ENCODE measurements at regions of chr2 and their contacts with region 1.

Region 1: DNA sequence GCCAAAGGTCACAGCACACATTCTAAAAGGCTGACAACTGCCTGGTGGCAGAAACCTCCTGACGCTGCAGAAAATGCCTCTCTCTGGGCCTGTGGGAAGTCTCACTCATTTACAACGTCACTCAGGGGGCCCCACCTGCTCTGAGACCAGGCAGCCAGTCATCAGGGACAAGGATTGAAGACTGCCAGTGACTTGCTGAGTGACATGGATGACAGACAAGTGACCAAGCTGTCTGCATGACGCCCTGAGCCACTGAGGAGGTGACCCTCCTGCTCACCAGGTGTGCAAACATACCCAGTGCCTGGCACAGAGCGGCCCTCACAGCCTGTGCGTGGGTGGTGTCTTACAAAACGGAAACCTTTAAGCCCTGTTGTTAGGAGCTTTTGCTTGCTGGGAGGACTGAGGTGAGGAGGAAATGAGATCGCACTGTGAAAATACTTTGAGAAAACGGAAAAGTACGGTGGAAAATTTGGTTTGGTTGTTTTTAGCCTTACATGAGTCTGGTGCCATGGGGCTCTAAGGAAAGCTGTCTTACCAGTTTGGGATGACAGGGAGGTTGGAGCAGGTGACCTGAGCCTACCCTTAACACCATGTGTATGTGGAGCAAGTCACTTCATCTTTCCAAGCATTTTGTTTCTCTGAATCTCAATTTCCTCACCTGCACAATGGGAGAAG is 392.3 kb downstream of the TNS1 start:
- DNase-seq: peak; percentile 89
- H3K4me3 Mint-ChIP-seq: peak overlapping the region; percentile 25
- H3K27ac Mint-ChIP-seq: peak overlapping the region; percentile 84
- H3K4me1 Mint-ChIP-seq: peaks cover 54% of the 10 kb centered on the region
- H3K27me3 Mint-ChIP-seq: no peaks in the 10 kb centered on the region

Region 2: DNA sequence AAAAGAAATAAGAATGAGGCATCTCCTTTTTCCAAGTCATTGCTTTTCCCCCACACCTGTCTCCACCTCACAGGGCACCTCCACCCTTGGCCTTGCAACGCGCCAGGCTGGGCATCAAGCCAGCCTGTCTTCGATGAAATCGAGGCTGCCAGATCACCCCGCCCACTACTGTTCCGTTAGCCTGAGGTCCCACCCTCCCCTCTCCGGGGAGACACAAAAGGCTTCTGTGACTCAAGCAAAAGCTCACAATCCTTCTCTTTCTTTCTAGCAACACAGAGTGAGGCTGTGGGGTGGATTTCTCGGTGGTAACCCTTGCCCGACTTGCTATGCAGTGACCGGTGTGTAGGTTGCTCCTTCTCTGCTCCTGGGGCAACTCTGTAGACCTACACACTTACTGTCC is 760.6 kb before region 1 on chr2:
- CTCF ChIA-PET with region 1: no interaction called
- intact Hi-C with region 1: loop called (anchors 10 kb)
- DNase-seq: peak; percentile 53
- H3K4me3 Mint-ChIP-seq: no peak overlapping the region
- H3K27ac Mint-ChIP-seq: no peak overlapping the region
- H3K4me1 Mint-ChIP-seq: peaks cover 15% of the 10 kb centered on the region
- H3K27me3 Mint-ChIP-seq: no peaks in the 10 kb centered on the region

Region 3: GRCh38 chr2:217090024-217090473 is 520.5 kb before region 1 on chr2:
- CTCF ChIA-PET with region 1: no interaction called
- intact Hi-C with region 1: loop called (anchors 2 kb)
- DNase-seq: peak; percentile 46
- H3K4me3 Mint-ChIP-seq: no peak overlapping the region
- H3K27ac Mint-ChIP-seq: no peak overlapping the region
- H3K4me1 Mint-ChIP-seq: peaks cover 25% of the 10 kb centered on the region
- H3K27me3 Mint-ChIP-seq: peaks cover 16% of the 10 kb centered on the region

Measured in activated naive CD4-positive, alpha-beta T cell treated with anti-CD3 and anti-CD28 coated beads for 36 hours (primary cell).